ENCODE measurements at regions of chr15 and their contacts with region 1.

Region 1: DNA sequence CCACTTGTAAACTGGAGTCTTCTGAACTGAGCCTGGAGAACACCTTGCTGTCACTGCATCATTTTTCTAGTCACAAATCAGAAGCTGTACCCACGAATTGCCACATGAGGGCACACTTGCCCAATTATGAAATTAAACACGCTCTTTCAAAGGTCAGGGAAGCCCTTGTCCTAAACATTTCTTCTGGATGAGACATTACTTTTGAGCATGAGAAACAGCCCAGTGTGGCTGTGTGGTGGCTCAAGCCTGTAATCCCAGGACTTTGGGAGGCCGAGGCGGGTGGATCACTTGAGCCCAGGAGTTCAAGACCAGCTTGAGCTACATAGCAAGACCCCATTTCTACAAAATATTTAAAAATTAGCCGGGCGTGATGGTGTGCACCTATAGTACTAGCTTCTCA is 27.5 kb upstream of the CFAP161 start:
- DNase-seq: peak in 2 of 5 donors; percentile 18 to 39
- ATAC-seq: peak; percentile 47 to 85 (median 72)
- H3K4me3 ChIP-seq: no peak overlapping the region
- H3K27ac ChIP-seq: no peak overlapping the region
- H3K4me1 ChIP-seq: peaks cover 0 to 16% (median 4%) of the 10 kb centered on the region in 12 donors
- H3K27me3 ChIP-seq: no peaks in the 10 kb centered on the region
- CTCF ChIP-seq: peak; percentile 66 to 85 (median 76)
- POLR2A ChIP-seq: no peak

Region 2: GRCh38 chr15:80942746-80943555 is 163.6 kb before region 1 on chr15:
- intact Hi-C with region 1: no loop called
- DNase-seq: peak in 4 of 5 donors; percentile 46 to 71 (median 62)
- ATAC-seq: peak; percentile 29 to 94 (median 81)
- H3K4me3 ChIP-seq: no peak overlapping the region
- H3K27ac ChIP-seq: no peak overlapping the region
- H3K4me1 ChIP-seq: peaks cover 0 to 8% (median 0%) of the 10 kb centered on the region in 12 donors
- H3K27me3 ChIP-seq: no peaks in the 10 kb centered on the region
- CTCF ChIP-seq: no peak
- POLR2A ChIP-seq: no peak

Region 3: DNA sequence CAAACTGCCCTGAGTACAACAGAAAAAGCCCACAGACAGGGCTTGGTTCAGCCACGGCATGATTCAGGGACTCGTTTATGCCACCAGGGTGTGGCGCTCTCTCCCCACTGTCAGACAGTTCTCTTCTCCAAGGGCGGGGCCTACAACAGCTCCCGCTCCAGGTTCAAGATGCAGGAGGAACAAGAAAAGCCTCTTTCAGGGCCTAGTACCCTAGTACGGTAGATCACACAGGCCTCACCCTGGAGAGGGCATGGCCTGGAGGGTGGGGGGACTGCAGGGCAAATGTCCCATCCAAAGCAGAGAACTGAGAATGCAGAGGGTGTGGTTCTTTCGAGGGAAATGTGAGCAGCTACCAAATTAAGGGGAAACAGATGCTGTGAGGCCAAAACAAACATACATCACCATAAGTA is 128.9 kb before region 1 on chr15:
- intact Hi-C with region 1: loop called in 3 of 10 experiments (anchors 5 kb)
- DNase-seq: peak; percentile 50 to 69 (median 53)
- ATAC-seq: peak; percentile 34 to 80 (median 72)
- H3K4me3 ChIP-seq: no peak overlapping the region
- H3K27ac ChIP-seq: no peak overlapping the region
- H3K4me1 ChIP-seq: peaks cover 0 to 39% (median 7%) of the 10 kb centered on the region in 12 donors
- H3K27me3 ChIP-seq: no peaks in the 10 kb centered on the region
- CTCF ChIP-seq: peak; percentile 35 to 65 (median 56)
- POLR2A ChIP-seq: no peak

Region 4: GRCh38 chr15:80989518-80990478 is 116.8 kb before region 1 on chr15 and contains the start of gene MESD:
- intact Hi-C with region 1: loop called in 2 of 10 experiments (anchors 2 to 10 kb)
- DNase-seq: peak; percentile 98 to 99 (median 99)
- ATAC-seq: peak; percentile 97 to 99 (median 98)
- H3K4me3 ChIP-seq: peak within 1 kb of the TSS; percentile 75 to 97 (median 88)
- H3K27ac ChIP-seq: peak within 1 kb of the TSS; percentile 80 to 96 (median 92)
- H3K4me1 ChIP-seq: peaks cover 10 to 67% (median 55%) of the 10 kb centered on the region in 12 donors
- H3K27me3 ChIP-seq: no peaks in the 10 kb centered on the region
- CTCF ChIP-seq: no peak
- POLR2A ChIP-seq: peak; percentile 36 to 94
- total RNA-seq, gene MESD: 11.2 to 19.8 (median 14.8) TPM

Region 5: GRCh38 chr15:81000624-81001151 is 105.9 kb before region 1 on chr15 and contains the start of gene TLNRD1:
- intact Hi-C with region 1: loop called in 3 of 10 experiments (anchors 5 to 10 kb)
- DNase-seq: peak; percentile 93 to 95 (median 94)
- ATAC-seq: peak; percentile 60 to 87 (median 83)
- H3K4me3 ChIP-seq: peak within 1 kb of the TSS; percentile 57 to 98 (median 90)
- H3K27ac ChIP-seq: peak within 1 kb of the TSS; percentile 88 to 100 (median 99)
- H3K4me1 ChIP-seq: peaks cover 3 to 55% (median 34%) of the 10 kb centered on the region in 12 donors
- H3K27me3 ChIP-seq: peaks cover 0 to 7% (median 0%) of the 10 kb centered on the region in 9 donors
- CTCF ChIP-seq: no peak
- POLR2A ChIP-seq: peak in 1 of 2 donors; percentile 81
- total RNA-seq, gene TLNRD1: 5.3 to 30.8 (median 8.0) TPM

Region 6: DNA sequence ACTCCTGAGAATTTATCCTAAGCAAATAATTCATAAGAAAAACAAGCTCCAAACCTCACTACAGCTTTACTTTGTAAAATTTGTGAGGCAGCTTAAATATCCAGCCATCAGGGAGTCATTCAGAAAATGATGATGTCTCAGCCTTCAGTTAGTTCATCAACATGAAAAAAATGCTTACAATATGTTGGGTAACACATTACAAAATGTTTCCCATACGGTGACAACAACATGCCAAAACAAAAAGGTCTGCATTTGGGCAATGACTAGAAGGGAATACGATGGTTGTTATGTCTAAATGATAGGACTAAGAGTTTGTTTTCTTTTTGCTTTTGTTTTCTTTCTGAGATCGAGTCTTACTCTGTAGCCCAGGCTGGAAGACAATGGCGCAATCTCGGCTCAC is 19.5 kb before region 1 on chr15:
- intact Hi-C with region 1: no loop called
- DNase-seq: no peak
- ATAC-seq: no peak
- H3K4me3 ChIP-seq: no peak overlapping the region
- H3K27ac ChIP-seq: no peak overlapping the region
- H3K4me1 ChIP-seq: peaks cover 0 to 14% (median 3%) of the 10 kb centered on the region in 12 donors
- H3K27me3 ChIP-seq: no peaks in the 10 kb centered on the region
- CTCF ChIP-seq: no peak
- POLR2A ChIP-seq: no peak

Region 7: DNA sequence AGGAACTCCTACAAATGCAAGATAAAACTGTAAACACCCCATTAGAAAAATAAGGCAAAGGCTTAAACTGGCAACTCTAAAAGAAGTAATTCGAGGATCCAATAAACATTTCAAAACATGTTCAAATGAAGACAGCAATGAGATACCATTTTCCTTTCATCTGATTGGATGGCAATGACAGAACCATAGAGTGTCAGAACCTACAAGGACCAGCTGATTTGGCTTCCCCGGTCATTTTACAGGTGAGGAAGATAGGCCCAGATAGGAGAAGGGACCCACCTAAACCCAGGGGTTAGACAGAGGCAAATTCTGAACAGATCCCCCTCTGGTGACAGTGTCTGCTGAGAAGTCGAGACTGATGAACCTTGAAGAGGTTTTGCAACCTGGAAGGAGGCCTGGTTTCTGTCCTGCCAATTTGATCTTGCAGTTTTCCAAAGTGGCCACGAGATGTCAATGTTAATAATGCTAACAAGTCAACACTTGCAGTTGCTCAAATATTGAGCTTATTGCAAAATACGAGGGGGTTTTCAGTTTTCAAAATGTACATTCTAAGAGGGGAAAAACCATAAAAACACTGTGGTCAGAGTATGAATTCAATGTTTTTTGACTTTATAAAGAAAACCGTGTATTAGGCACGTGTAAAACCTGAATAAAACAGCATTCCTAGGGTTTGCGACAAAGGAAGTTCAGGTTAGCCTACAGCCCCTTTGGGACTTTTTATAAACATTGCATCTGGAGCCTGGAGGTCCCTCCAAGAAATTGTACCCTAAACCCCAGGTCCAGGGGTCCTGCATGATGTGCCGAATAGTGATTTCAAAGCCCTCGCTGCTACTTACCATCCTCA is 49.0 kb after region 1 on chr15:
- intact Hi-C with region 1: loop called in 2 of 10 experiments (anchors 5 to 10 kb)
- DNase-seq: no peak
- ATAC-seq: peak in 2 of 4 donors; percentile 7 to 48
- H3K4me3 ChIP-seq: no peak overlapping the region
- H3K27ac ChIP-seq: no peak overlapping the region
- H3K4me1 ChIP-seq: peaks cover 0 to 24% (median 15%) of the 10 kb centered on the region in 12 donors
- H3K27me3 ChIP-seq: no peaks in the 10 kb centered on the region
- CTCF ChIP-seq: peak; percentile 29 to 78 (median 66)
- POLR2A ChIP-seq: no peak

Region 8: GRCh38 chr15:81256916-81257315 is 150.4 kb after region 1 on chr15:
- intact Hi-C with region 1: loop called in 1 of 10 experiments (anchors 2 kb)
- DNase-seq: no peak
- ATAC-seq: peak in 2 of 4 donors; percentile 48 to 56
- H3K4me3 ChIP-seq: no peak overlapping the region
- H3K27ac ChIP-seq: no peak overlapping the region
- H3K4me1 ChIP-seq: peaks cover 0 to 12% (median 0%) of the 10 kb centered on the region in 12 donors
- H3K27me3 ChIP-seq: no peaks in the 10 kb centered on the region
- CTCF ChIP-seq: peak in 11 of 12 donors; percentile 7 to 66 (median 49)
- POLR2A ChIP-seq: no peak

Region 9: DNA sequence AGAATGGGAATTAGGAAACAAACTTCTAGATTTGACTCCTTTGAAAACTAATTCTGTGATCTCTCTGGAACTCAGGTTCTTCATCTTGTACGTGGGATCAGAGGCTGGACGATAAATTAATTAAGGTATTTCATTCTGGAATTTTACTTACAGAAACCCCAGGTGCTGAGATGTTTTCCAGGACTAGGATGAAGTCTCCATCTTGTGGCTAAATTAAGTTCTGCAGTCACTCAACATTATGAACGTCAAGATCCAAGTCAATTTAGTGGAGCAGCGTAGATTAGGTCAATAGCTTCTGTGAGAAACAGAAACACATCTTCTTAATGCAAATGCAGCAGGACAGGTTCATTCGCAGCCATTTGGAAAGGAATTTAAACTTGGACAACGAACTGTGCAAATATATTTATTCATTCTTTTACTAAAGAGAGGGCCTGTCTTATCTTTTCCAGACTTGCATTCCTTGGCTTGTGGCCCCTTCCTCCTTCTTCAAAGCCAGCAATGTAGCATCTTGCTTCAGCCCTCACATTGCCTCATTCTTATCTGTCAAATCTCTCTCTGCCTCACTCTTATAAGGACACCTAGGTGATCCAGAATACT is 294.2 kb after region 1 on chr15:
- intact Hi-C with region 1: loop called in 1 of 10 experiments (anchors 2 kb)
- DNase-seq: no peak
- ATAC-seq: no peak
- H3K4me3 ChIP-seq: no peak overlapping the region
- H3K27ac ChIP-seq: no peak overlapping the region
- H3K4me1 ChIP-seq: no peaks in the 10 kb centered on the region
- H3K27me3 ChIP-seq: no peaks in the 10 kb centered on the region
- CTCF ChIP-seq: peak; percentile 69 to 82 (median 73)
- POLR2A ChIP-seq: no peak